ENCODE measurements at regions of chr17 and their contacts with region 1.

Region 1: GRCh38 chr17:35119368-35120165 is at the start of gene RAD51D:
- DNase-seq: peak; percentile 86
- ATAC-seq: peak; percentile 100
- total RNA-seq, gene RAD51D: 4.4 TPM

Region 2: DNA sequence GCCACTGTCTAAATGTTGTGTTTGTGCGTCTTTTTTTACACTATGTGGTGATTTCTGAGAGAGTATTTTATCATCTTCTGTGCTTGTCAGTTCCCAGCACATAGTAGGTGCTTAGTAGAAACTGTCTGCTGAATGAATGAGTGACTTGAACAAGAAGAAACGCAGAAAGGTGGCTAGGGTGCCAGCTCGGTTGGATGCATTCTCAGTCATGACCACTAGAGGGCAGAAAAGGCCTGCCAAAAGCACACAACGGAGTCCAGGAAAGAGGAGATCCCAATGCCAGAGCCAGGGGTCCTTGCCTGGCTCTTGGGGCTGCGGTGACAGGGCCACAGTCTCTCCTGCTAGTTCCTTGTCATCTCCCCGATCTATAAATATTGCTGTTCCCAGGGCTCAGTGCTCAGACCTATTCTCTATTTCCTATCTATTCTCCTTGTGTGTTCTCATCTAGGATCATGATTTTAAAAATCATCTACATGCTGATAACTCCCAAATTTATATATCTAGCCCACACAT is 699.3 kb before region 1 on chr17:
- intact Hi-C with region 1: loop called (anchors 5 kb)
- DNase-seq: peak; percentile 58
- ATAC-seq: peak; percentile 73

Region 3: DNA sequence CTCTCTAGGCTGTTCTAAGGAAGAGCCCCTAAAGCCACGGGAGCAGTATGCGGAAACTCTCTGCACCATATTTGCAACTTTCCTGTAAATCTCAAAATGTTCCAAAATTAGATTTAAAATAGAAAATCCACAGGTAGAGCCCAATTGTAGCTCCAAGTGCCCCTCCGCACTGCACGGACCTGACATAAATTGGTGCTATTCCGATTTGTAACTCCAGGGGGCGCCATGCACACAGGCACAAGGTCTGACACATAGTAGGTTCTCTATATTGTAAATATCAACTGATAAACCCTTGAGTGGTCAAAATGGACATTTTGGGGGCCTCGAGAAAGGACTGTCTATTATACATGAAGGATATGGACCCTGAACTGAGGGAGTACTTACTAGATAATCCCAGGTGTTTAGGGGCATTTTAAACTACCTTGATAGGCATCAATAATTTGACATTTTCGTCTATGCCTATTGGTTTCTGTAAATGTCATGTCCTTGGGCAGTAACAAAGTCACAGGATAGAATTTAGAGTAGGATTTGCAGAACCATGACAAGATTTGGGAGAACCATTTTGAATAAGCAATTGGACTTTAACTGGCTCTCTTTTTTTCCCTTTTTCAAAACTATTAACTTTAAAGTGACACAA is 576.7 kb before region 1 on chr17:
- intact Hi-C with region 1: loop called (anchors 5 kb)
- DNase-seq: no peak
- ATAC-seq: no peak

Region 4: DNA sequence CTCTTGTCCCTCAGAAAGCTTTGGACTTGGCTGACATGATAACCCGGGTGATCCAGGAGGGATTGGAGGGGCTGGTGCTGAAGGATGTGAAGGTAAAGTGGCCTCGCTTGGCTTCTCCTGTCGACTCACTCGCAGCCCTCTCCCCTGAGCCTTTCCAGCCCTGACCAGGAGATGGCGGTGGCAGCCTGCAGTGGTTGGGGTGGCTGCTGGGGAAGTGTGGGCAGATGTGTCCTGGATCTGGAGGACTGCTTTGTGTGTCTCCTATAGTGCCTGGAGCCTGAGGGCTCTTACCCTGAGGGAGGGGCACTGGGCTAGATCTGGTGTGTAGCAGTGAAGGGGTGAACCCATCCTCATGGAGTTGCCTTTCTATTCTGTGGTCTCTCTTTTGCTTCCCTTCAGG is 121.4 kb before region 1 on chr17:
- intact Hi-C with region 1: loop called (anchors 10 kb)
- DNase-seq: peak; percentile 84
- ATAC-seq: peak; percentile 86

Measured in Right ventricle myocardium superior (tissue), 1 donor.